Cardiac septum (tissue), 1 donor: ENCODE measurements at regions of chr1 and their contacts with region 1.

Region 1: DNA sequence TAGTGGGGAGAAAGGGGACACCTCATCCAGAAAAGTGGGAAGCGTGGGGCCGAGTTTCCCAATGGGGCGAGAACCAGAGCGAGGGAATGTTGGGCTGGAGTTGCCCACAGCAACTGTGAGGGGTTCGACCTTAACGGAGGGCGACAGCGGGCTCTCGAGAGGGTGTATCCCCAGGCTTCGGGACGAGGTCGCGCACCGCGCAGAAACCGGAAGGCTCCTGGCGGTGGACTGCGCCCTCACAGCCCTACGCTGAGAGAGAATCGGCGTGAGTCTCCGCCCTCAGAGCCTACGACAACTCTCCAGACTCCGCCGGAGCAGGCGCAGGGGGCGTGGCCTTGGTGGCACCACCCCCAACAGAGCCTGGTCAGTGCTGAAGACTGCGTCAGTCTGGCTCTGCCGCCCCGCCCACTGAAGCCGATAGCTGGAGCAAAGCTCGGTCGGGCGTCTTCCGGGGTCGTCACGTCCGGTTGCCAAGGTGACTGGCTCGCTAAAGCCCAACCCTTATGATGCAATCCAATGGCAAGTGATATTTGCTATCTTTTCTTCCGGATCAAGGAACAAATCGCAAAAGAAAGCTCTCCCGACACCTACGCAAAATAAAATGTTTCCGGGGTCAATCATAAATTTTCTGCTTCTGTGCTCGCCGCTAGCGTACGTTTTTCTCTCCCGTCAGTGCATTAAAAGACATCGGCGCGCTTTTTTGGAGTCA is at the start of gene LRIF1:
- DNase-seq: peak; percentile 100
- total RNA-seq, gene LRIF1: 16.5 TPM

Region 2: DNA sequence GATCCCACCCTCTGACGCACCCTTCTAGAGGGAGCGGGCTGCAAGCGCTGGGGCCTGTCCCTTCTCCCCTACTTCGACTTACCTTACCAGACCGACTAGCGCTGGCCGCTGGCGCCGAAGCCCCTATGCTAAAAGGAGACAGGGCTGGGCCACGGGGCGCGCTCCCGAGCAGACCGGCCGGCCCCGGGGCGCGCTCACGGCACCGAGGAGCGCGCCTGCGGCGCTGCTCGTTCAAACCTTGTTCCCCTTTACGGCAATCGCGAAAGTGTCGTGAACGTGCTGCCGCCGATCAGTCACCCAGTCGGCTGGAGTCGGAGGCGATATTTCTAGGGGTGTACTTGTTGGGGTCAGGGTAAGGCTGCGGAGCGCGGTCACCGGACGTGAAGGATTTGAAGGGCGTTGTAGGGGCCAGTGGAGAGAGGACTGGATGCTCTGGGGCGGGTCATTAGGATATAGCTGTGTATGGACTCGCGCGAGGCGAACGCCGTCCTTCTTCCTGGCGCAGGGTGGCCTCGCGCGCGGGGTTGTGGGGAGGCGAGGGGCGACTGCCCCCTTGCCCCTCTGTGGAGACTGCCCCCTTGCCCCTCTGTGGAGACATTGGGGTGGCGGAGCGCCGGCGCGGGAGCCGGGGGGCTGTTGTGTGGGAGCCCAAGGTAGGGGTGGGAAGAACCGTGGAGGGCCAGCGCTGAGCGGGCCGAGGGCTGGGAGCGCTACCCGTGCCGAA is 176.3 kb after region 1 on chr1 and contains the starts of genes CEPT1 and DRAM2:
- intact Hi-C with region 1: loop called (anchors 5 kb)
- DNase-seq: peak; percentile 97
- total RNA-seq, gene CEPT1: 14.3 TPM
- total RNA-seq, gene DRAM2: 26.1 TPM